ENCODE measurements at regions of chr2 and their contacts with region 1.

Region 1: GRCh38 chr2:213251618-213252017 is 32.6 kb upstream of the SPAG16 start:
- DNase-seq: peak; percentile 93
- ATAC-seq: peak; percentile 65
- H3K4me3 ChIP-seq: peak overlapping the region; percentile 41; the same call in 1 of the 2 replicates
- H3K27ac ChIP-seq: no peak overlapping the region
- H3K4me1 ChIP-seq: peaks cover 18% of the 10 kb centered on the region
- H3K27me3 ChIP-seq: no peaks in the 10 kb centered on the region
- CTCF ChIP-seq: peak; percentile 65

Region 2: DNA sequence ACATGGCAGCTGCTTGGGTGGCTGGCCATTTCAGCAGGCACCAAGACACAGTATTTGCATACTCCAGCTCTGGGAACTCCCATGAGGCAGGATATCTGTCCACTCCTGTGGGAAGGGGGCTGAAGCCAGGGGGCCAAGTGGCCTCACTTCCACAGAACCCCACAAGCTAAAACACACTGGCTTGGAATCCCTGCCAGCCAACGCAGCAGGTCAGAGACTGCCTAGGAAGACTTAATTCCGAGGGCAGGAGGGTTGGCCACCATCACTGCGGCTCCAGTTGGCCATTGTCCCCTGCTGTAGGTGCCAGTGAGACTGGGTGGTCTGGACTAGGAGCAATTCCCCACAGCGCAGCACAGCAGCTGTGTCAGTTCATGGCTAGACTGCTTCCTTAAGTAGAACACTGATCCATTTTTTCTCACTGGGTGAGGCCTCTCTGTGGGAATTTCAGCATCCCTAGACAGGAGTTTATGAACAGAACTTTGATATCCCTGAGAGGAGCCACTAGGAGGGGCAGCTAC is 84.7 kb after region 1 on chr2:
- CTCF ChIA-PET with region 1: no interaction called
- POLR2A ChIA-PET with region 1: no interaction called
- intact Hi-C with region 1: loop called (anchors 1 kb)
- DNase-seq: no peak
- ATAC-seq: no peak
- H3K4me3 ChIP-seq: no peak overlapping the region
- H3K27ac ChIP-seq: no peak overlapping the region
- H3K4me1 ChIP-seq: peaks cover 12% of the 10 kb centered on the region; the same call in 1 of the 2 replicates
- H3K27me3 ChIP-seq: no peaks in the 10 kb centered on the region
- CTCF ChIP-seq: no peak

Region 3: DNA sequence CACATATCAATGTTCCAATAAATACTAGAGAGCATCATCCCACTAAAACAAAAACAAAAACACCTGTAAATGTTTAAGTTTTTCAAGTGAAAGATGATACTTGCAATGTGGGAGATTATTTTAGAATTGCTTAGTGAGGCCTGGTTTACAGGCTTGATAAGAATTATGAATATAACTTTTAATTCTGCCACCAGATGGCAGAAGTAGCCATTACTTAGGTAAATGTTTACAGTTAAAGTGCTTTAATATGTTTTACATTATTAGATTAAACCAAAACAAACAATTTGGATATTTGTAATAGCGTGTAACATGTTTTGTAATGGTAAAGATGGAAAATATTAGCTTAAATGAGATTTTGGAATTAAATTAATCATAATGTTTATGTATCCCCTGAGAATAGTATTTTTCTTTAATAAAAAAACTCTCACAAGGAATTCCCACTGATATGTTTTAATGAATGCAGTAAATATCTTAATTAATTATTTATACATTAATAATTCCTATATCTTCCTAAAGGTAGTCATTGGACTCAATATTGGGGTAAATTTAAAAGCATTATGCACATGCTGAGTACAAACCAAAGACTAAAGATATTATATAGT is 554.6 kb after region 1 on chr2:
- CTCF ChIA-PET with region 1: no interaction called
- POLR2A ChIA-PET with region 1: no interaction called
- intact Hi-C with region 1: loop called (anchors 1 kb)
- DNase-seq: peak; percentile 71
- ATAC-seq: no peak; the same call in 1 of the 2 replicates
- H3K4me3 ChIP-seq: no peak overlapping the region
- H3K27ac ChIP-seq: no peak overlapping the region
- H3K4me1 ChIP-seq: no peaks in the 10 kb centered on the region
- H3K27me3 ChIP-seq: no peaks in the 10 kb centered on the region
- CTCF ChIP-seq: peak; percentile 73

Region 4: DNA sequence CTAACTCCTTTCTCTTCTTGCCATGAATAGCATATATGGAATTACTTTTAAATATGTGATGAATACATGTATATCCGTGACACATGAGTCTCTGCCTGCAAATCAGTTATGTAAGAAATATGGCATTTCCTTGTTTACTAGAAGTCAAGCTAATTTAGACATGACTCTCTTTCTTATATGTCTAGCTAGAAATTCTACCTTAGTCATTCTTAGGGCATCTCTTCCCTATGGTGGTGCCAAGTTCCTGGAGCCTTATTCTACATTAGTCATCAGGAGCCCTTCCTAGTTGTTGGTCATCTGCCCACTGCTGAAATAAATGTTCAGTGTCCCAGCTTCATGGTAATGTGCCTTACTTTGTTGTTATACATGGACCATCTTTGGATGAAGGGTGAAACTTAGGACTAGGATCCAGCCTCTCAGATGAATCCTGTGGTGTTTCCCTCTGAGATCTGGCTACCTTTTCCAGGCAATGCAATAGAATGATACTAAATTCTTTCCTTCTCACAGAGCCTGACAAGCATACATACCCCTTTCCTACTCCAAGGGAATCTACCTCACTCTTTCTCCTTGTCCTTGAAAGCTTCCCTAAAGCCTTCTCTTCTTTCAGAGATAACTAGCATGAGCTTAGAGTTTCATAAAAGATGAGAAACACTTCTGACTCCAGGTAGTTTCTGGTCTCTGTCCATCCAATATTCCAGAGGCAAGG is 743.9 kb after region 1 on chr2:
- CTCF ChIA-PET with region 1: no interaction called
- POLR2A ChIA-PET with region 1: no interaction called
- intact Hi-C with region 1: loop called (anchors 1 kb)
- DNase-seq: peak; percentile 95
- ATAC-seq: peak; percentile 98
- H3K4me3 ChIP-seq: no peak overlapping the region
- H3K27ac ChIP-seq: peak overlapping the region; percentile 61
- H3K4me1 ChIP-seq: peaks cover 17% of the 10 kb centered on the region
- H3K27me3 ChIP-seq: no peaks in the 10 kb centered on the region
- CTCF ChIP-seq: no peak

Region 5: GRCh38 chr2:214410918-214411554 is 1159.4 kb after region 1 on chr2 and contains the start of gene VWC2L:
- CTCF ChIA-PET with region 1: no interaction called
- POLR2A ChIA-PET with region 1: no interaction called
- intact Hi-C with region 1: loop called (anchors 10 kb)
- DNase-seq: peak; percentile 87
- ATAC-seq: peak; percentile 100
- H3K4me3 ChIP-seq: no peak within 1 kb of the TSS
- H3K27ac ChIP-seq: no peak within 1 kb of the TSS
- H3K4me1 ChIP-seq: 0 out of 2 replicates have a peak, but pooled peaks cover 4% of the 10 kb centered on the region
- H3K27me3 ChIP-seq: no peaks in the 10 kb centered on the region
- CTCF ChIP-seq: no peak
- total RNA-seq, gene VWC2L: not detected in 2 replicates

Region 6: DNA sequence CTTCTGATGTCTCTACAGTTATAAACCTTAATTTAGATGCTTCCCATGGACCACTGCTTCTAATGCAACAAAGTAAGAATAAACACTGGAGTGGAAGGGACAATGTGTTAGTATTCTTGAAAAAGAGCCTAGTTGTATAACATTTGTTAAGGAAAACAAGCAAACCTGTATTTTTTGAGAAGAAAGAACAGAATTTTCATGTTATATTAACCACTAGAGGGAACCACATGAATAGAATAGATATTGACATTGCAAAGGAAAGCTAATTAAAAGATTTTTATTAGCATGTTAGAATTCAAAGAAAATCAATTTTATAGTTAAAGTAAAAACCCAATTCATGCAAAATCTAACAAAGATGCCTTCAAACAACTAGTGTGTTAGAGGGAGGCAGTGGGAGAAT is 1709.1 kb after region 1 on chr2:
- CTCF ChIA-PET with region 1: no interaction called
- POLR2A ChIA-PET with region 1: no interaction called
- intact Hi-C with region 1: loop called (anchors 10 kb)
- DNase-seq: peak; percentile 42
- ATAC-seq: no peak
- H3K4me3 ChIP-seq: no peak overlapping the region
- H3K27ac ChIP-seq: no peak overlapping the region
- H3K4me1 ChIP-seq: no peaks in the 10 kb centered on the region
- H3K27me3 ChIP-seq: no peaks in the 10 kb centered on the region
- CTCF ChIP-seq: peak; percentile 70

Measured in PC-3 (cell line).